Heart left ventricle (tissue), 16 donors: ENCODE measurements at regions of chr11 and their contacts with region 1.

Region 1: GRCh38 chr11:19742588-19743292 is 30.1 kb downstream of the NAV2 start:
- DNase-seq: peak; percentile 75 to 85 (median 79)
- ATAC-seq: peak; percentile 70 to 86 (median 83)
- H3K4me3 ChIP-seq: no peak overlapping the region
- H3K27ac ChIP-seq: peak overlapping the region in 2 of 12 donors; percentile 7 to 25
- H3K4me1 ChIP-seq: peaks cover 0 to 48% (median 10%) of the 10 kb centered on the region in 12 donors
- H3K27me3 ChIP-seq: no peaks in the 10 kb centered on the region
- CTCF ChIP-seq: peak; percentile 81 to 95 (median 89)
- POLR2A ChIP-seq: no peak

Region 2: GRCh38 chr11:19311308-19312030 is 431.3 kb before region 1 on chr11:
- intact Hi-C with region 1: loop called in 4 of 10 experiments (anchors 10 kb)
- DNase-seq: peak; percentile 47 to 66 (median 60)
- ATAC-seq: peak; percentile 56 to 88 (median 80)
- H3K4me3 ChIP-seq: no peak overlapping the region
- H3K27ac ChIP-seq: no peak overlapping the region
- H3K4me1 ChIP-seq: peaks cover 0 to 10% (median 0%) of the 10 kb centered on the region in 12 donors
- H3K27me3 ChIP-seq: no peaks in the 10 kb centered on the region
- CTCF ChIP-seq: peak; percentile 70 to 86 (median 81)
- POLR2A ChIP-seq: no peak

Region 3: DNA sequence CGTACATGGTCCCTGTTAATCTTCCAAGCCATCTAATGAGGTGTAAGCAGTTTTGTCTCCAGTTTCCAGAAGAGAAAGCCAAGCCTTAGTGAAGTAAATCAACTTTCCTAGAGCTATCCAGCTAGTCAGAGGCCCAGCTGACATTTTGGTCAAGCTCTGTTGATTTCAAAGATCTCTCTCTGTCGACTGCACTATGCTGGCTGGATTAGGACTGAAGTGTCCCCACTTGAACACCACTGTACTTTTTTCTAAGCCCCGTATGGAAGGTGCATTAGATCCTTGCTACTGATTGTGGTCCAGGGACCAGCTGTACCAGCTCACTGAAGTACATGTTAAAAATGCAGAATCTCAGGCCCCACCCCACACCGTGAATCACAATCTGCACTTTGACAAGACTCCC is 206.6 kb before region 1 on chr11:
- intact Hi-C with region 1: no loop called
- DNase-seq: no peak
- ATAC-seq: no peak
- H3K4me3 ChIP-seq: no peak overlapping the region
- H3K27ac ChIP-seq: no peak overlapping the region
- H3K4me1 ChIP-seq: no peaks in the 10 kb centered on the region
- H3K27me3 ChIP-seq: no peaks in the 10 kb centered on the region
- CTCF ChIP-seq: no peak
- POLR2A ChIP-seq: no peak

Region 4: DNA sequence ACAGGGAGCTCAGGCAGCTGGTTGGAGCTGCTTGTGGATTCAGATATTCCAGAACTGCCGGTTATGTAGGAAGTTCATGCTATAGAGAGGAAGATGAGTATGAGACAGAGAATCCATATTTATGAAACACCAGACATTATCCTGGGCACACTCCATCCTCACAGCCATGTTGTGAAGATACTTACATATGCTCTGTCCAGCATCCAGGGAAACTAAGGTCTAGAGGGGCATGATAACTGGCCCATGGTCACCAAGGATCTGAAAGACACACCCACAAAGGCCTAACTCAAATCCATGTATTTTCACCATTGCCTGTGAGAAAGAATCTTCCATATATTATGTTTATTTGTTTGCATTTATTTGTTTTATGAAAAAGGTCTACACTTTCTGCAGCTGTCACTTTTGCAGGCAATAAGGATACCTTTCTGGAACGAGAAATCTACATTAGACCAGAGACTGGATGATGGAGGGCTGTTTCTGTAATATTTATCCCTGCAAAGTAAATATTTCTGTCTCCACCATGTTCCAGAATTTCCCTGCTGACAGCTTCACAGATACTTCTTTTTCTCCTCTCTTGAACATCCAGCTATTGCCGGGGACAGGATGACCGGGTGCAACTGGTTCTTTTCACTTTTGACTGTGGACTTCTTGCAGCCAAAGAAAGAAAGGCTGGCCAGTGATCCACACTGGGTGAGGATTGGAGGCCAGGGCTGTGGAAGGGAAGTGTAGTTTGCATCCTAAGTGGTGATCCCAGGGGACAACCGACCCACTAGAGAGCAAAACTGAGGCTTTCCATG is 176.0 kb before region 1 on chr11:
- intact Hi-C with region 1: loop called (anchors 1 to 2 kb)
- DNase-seq: no peak
- ATAC-seq: no peak
- H3K4me3 ChIP-seq: no peak overlapping the region
- H3K27ac ChIP-seq: peak overlapping the region in 1 of 12 donors; percentile 60
- H3K4me1 ChIP-seq: peaks cover 0 to 16% (median 5%) of the 10 kb centered on the region in 12 donors
- H3K27me3 ChIP-seq: peaks cover 0 to 4% (median 0%) of the 10 kb centered on the region in 9 donors
- CTCF ChIP-seq: no peak
- POLR2A ChIP-seq: no peak

Region 5: GRCh38 chr11:19712281-19713220 is 30.2 kb before region 1 on chr11 and contains the start of gene NAV2:
- intact Hi-C with region 1: loop called in 1 of 10 experiments (anchors 2 kb)
- DNase-seq: peak; percentile 94 to 96 (median 95)
- ATAC-seq: peak; percentile 84 to 96 (median 92)
- H3K4me3 ChIP-seq: peak within 1 kb of the TSS; percentile 52 to 89 (median 72)
- H3K27ac ChIP-seq: peak within 1 kb of the TSS; percentile 75 to 98 (median 94)
- H3K4me1 ChIP-seq: peaks cover 0 to 50% (median 36%) of the 10 kb centered on the region in 12 donors
- H3K27me3 ChIP-seq: peaks cover 0 to 30% (median 0%) of the 10 kb centered on the region in 9 donors
- CTCF ChIP-seq: peak in 4 of 12 donors; percentile 2 to 12 (median 10)
- POLR2A ChIP-seq: peak; percentile 77 to 99
- total RNA-seq, gene NAV2: 12.3 to 46.5 (median 25.4) TPM

Region 6: GRCh38 chr11:19790831-19791552 is 48.3 kb after region 1 on chr11:
- intact Hi-C with region 1: loop called in 1 of 10 experiments (anchors 5 kb)
- DNase-seq: no peak
- ATAC-seq: no peak
- H3K4me3 ChIP-seq: no peak overlapping the region
- H3K27ac ChIP-seq: no peak overlapping the region
- H3K4me1 ChIP-seq: peaks cover 0 to 56% (median 22%) of the 10 kb centered on the region in 12 donors
- H3K27me3 ChIP-seq: no peaks in the 10 kb centered on the region
- CTCF ChIP-seq: no peak
- POLR2A ChIP-seq: no peak

Region 7: GRCh38 chr11:19903620-19904069 is 160.9 kb after region 1 on chr11:
- intact Hi-C with region 1: loop called in 8 of 10 experiments (anchors 5 kb)
- DNase-seq: peak in 4 of 5 donors; percentile 46 to 75 (median 68)
- ATAC-seq: peak; percentile 44 to 73 (median 63)
- H3K4me3 ChIP-seq: no peak overlapping the region
- H3K27ac ChIP-seq: peak overlapping the region in 1 of 12 donors; percentile 10
- H3K4me1 ChIP-seq: peaks cover 0 to 26% (median 5%) of the 10 kb centered on the region in 12 donors
- H3K27me3 ChIP-seq: no peaks in the 10 kb centered on the region
- CTCF ChIP-seq: peak; percentile 68 to 85 (median 76)
- POLR2A ChIP-seq: no peak